ENCODE measurements at regions of chr11 and their contacts with region 1.

Region 1: DNA sequence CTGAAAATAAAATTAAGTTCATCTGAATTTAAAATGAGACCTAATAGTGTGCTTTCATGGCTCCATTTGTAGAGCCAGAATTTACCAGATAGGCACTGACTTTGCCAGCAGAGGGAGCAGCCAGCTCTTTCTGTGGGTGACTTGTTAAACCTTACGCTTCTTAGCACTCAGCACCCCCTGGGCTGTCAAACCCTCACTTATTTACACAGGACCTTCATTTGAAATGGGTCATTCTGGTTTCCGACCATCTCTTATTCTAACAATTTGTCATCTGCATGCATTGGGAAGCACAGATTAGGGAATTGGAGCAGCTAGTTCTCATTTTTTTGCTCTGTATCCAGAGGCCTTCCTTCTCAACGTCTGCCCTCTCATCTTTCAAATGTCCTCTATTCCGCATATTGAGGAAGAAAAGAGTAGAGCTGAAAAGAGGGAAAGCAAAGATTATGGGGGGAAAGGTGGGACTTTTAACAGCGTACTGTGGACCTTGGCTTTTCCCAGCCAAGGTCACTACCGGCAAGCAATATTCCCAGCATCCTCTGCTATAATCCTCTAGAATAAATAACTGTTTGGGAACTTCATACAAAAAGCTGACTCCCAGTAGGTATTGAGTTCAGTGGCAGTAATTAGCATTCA is 3.1 kb downstream of the ASRGL1 start:
- DNase-seq: peak; percentile 76
- H3K4me3 ChIP-seq: no peak overlapping the region
- H3K27ac ChIP-seq: peak overlapping the region; percentile 35
- H3K4me1 ChIP-seq: peaks cover 28% of the 10 kb centered on the region
- H3K27me3 ChIP-seq: peaks cover 0 to 5% of the 10 kb centered on the region in 2 experiments
- CTCF ChIP-seq: peak; percentile 71 to 74
- POLR2A ChIP-seq: no peak

Region 2: DNA sequence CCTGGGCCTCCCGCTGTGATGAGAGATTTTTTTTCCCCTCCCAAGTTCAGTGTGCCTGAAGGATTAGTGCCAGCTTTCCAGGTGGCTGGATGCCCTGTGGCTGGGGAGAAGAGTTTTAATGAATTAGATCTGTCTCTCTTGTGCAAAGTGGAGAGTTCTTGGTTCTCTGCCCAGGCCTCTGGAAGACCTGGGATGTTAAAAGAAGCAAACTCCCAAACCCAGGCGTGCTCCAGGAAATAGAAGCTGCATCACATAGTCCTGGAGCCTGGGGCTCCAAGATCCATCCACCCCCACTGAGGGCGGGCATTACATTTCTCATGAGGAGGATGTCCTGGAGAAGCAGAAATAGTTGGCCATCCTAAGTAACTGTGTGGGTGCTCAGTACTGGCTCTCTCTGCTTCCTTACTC is 879.9 kb before region 1 on chr11:
- CTCF ChIA-PET with region 1: no interaction called
- POLR2A ChIA-PET with region 1: no interaction called
- dilution Hi-C with region 1: no loop called
- intact Hi-C with region 1: no loop called
- DNase-seq: no peak
- H3K4me3 ChIP-seq: no peak overlapping the region
- H3K27ac ChIP-seq: no peak overlapping the region
- H3K4me1 ChIP-seq: no peaks in the 10 kb centered on the region
- H3K27me3 ChIP-seq: no peaks in the 10 kb centered on the region
- CTCF ChIP-seq: no peak
- POLR2A ChIP-seq: no peak

Region 3: GRCh38 chr11:62217191-62217748 is 123.1 kb before region 1 on chr11:
- CTCF ChIA-PET with region 1: interaction called, 10 read pairs
- POLR2A ChIA-PET with region 1: no interaction called
- dilution Hi-C with region 1: no loop called
- intact Hi-C with region 1: no loop called
- DNase-seq: peak; percentile 31
- H3K4me3 ChIP-seq: no peak overlapping the region
- H3K27ac ChIP-seq: no peak overlapping the region
- H3K4me1 ChIP-seq: no peaks in the 10 kb centered on the region
- H3K27me3 ChIP-seq: peaks cover 6 to 9% of the 10 kb centered on the region in 2 experiments
- CTCF ChIP-seq: peak; percentile 31 to 38
- POLR2A ChIP-seq: no peak

Region 4: DNA sequence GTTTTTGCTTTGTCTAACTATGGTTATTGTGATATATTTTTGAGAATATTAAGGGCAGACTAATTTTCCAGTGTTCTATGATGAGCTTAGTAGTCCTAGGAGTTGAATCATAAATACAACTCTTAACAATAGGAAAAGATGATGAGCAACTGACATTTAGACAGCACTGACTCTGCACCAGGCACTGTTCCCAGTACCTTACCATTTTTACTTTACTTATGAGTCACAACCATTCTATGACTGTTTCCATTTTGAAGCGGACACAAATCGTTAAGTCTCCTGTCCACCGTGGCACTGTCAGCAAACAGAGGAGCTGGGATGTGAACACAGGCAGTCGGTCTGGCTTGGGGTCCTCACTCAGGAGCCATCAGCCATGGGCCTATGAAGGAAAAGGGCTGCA is 73.8 kb before region 1 on chr11:
- CTCF ChIA-PET with region 1: no interaction called
- POLR2A ChIA-PET with region 1: no interaction called
- dilution Hi-C with region 1: no loop called
- intact Hi-C with region 1: no loop called
- DNase-seq: peak; percentile 67
- H3K4me3 ChIP-seq: no peak overlapping the region
- H3K27ac ChIP-seq: no peak overlapping the region
- H3K4me1 ChIP-seq: peaks cover 28% of the 10 kb centered on the region
- H3K27me3 ChIP-seq: peaks cover 4 to 7% of the 10 kb centered on the region in 2 experiments
- CTCF ChIP-seq: no peak
- POLR2A ChIP-seq: no peak

Region 5: DNA sequence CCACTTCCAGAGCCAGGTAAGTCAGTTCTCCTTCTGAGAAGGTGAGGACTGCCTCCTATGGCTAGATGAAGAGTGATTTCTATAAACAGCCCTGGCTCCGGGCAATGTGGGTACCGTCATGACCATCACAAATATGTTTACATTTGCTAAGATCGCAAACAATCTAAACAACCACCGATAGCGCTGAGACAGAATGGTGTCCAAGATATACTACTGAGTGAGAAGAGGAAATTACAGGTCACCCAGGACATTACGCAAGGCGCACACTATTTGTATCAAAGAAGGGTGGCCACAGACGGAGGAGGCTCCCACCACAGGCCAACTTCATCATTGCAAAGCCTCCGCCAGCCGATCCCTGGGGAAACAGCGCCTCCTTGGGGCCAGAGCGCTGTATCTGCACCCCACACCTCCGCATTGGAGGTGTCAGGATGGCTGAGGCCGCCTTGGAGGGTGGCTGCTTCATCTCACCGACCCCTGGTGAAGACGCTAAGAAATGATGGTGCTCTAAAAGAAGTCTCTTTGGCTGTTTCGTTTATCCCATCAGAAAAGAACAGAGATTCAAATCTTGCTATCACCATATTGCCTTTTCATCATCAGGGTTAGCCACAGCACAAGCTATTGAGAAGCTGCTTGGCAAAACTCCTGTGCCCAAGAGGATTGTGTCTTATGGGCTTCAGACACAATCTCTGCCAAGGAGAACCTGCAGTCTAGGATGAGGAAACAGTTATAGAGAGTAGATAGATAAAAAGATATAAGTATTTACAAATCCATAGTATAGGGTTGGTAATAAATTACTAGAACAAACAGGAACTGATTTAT is 15.4 kb before region 1 on chr11:
- CTCF ChIA-PET with region 1: interaction called, 12 read pairs
- POLR2A ChIA-PET with region 1: no interaction called
- dilution Hi-C with region 1: no loop called
- intact Hi-C with region 1: no loop called
- DNase-seq: peak; percentile 45
- H3K4me3 ChIP-seq: no peak overlapping the region
- H3K27ac ChIP-seq: no peak overlapping the region
- H3K4me1 ChIP-seq: no peaks in the 10 kb centered on the region
- H3K27me3 ChIP-seq: peaks cover 0 to 5% of the 10 kb centered on the region in 2 experiments
- CTCF ChIP-seq: peak; percentile 79 to 82
- POLR2A ChIP-seq: no peak

Region 6: DNA sequence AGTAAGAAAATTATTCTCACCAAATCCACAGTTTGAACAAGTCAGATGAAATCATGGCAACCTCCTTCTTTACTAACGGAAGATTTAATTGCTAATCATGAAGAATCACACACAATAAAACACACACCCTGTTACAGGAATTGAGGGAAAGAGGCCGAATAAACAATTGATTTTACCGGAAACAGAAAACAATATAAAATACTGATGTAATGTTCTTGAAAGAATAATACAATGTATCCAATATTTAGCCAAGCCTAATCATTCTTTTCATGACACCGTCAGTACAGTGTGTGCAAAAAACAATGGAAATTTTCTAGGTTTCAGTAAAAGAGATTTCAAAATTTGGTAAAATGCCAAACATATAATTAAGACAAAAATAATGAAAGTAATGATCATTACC is 20.3 kb after region 1 on chr11:
- CTCF ChIA-PET with region 1: interaction called, 35 read pairs
- POLR2A ChIA-PET with region 1: no interaction called
- dilution Hi-C with region 1: no loop called
- intact Hi-C with region 1: loop called (anchors 1 kb)
- DNase-seq: peak; percentile 86
- H3K4me3 ChIP-seq: peak overlapping the region; percentile 15 to 76 (median 15)
- H3K27ac ChIP-seq: peak overlapping the region; percentile 91
- H3K4me1 ChIP-seq: peaks cover 6% of the 10 kb centered on the region
- H3K27me3 ChIP-seq: no peaks in the 10 kb centered on the region
- CTCF ChIP-seq: no peak
- POLR2A ChIP-seq: no peak

Region 7: DNA sequence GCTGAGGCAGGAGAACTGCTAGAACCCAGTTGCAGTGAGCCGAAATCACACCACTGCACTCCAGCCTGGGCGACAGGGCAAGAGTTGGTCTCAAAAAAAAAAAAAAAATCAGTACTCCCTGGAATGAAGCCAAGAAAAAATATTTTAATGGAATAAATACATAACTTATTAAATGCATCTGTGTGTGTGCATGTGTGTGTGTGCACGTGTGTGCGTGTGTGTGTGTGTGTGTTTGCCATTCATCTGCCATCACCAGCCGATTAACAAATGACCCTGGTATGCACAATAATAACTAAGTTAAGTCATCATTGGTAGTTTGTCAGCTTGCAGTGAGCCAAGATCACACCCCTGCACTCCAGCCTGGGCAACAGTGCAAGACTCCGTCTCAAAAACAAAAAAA is 43.4 kb after region 1 on chr11:
- CTCF ChIA-PET with region 1: interaction called, 15 read pairs
- POLR2A ChIA-PET with region 1: no interaction called
- dilution Hi-C with region 1: no loop called
- intact Hi-C with region 1: no loop called
- DNase-seq: no peak
- H3K4me3 ChIP-seq: no peak overlapping the region
- H3K27ac ChIP-seq: no peak overlapping the region
- H3K4me1 ChIP-seq: no peaks in the 10 kb centered on the region
- H3K27me3 ChIP-seq: no peaks in the 10 kb centered on the region
- CTCF ChIP-seq: no peak
- POLR2A ChIP-seq: no peak